ENCODE measurements at regions of chr15 and their contacts with region 1.

Region 1: DNA sequence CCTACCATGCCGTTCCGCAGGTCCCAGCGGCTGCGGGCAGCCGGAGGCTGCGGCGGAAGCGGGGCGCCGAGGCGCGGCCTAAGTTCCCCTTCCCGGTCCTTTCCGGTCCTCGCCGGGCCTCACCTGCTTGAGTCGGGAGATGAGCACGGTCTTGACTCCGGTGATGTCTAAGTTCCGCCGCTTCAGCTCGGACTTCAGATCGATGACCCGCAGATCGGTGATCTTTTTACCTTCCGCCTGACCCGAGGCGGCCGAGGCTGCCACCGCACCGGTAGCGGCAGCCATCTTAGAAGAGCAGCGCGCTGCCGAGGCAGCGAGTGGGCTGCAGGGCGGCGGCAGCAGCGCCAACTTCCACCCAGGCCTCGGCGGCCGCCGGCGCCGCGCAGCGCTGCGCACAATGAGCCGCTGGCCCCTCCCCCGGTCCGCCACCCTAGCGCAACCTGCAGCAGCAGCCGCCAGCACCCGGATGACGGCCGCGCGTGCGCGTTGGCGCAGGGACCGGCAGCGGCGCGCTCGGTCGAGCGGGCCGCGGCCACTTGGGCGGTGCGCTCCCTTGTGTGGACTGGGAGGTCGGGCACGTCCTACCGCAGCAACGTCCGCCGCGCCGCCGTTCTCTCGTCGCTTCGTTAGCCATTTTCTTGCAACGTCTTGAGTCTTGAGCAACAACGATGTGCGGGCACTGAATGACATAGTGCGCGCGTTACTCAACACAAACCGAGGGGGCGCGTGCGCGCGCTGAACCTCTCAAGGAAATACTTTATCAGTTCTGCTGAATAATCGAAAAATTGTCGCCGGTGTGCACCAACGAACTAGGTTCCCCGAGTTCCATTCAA is at the start of gene SLTM:
- DNase-seq: peak; percentile 93 to 95 (median 94)
- H3K4me3 ChIP-seq: peak within 1 kb of the TSS; percentile 59 to 97
- H3K4me3 Mint-ChIP-seq: peak within 1 kb of the TSS; percentile 96 to 100 (median 99)
- H3K27ac ChIP-seq: peak within 1 kb of the TSS; percentile 98
- H3K27ac Mint-ChIP-seq: peak within 1 kb of the TSS; percentile 94 to 100 (median 100)
- H3K4me1 ChIP-seq: peaks cover 25% of the 10 kb centered on the region
- H3K4me1 Mint-ChIP-seq: peaks cover 9 to 35% (median 19%) of the 10 kb centered on the region in 4 donors
- H3K27me3 ChIP-seq: no peaks in the 10 kb centered on the region
- H3K27me3 Mint-ChIP-seq: no peaks in the 10 kb centered on the region
- total RNA-seq, gene SLTM: 149 to 153 TPM

Region 2: GRCh38 chr15:58282060-58282708 is 651.3 kb before region 1 on chr15:
- CTCF ChIA-PET with region 1: no interaction called
- POLR2A ChIA-PET with region 1: no interaction called
- intact Hi-C with region 1: no loop called
- DNase-seq: no peak
- H3K4me3 ChIP-seq: no peak overlapping the region
- H3K4me3 Mint-ChIP-seq: no peak overlapping the region
- H3K27ac ChIP-seq: no peak overlapping the region
- H3K27ac Mint-ChIP-seq: no peak overlapping the region
- H3K4me1 ChIP-seq: no peaks in the 10 kb centered on the region
- H3K4me1 Mint-ChIP-seq: peaks cover 0 to 3% (median 0%) of the 10 kb centered on the region in 4 donors
- H3K27me3 ChIP-seq: no peaks in the 10 kb centered on the region
- H3K27me3 Mint-ChIP-seq: peaks cover 6 to 13% of the 10 kb centered on the region in 2 donors

Region 3: GRCh38 chr15:58749532-58750337 is 183.8 kb before region 1 on chr15 and contains the start of gene ADAM10:
- CTCF ChIA-PET with region 1: no interaction called
- POLR2A ChIA-PET with region 1: no interaction called
- intact Hi-C with region 1: loop called (anchors 1 kb)
- DNase-seq: peak; percentile 93 to 98 (median 94)
- H3K4me3 ChIP-seq: peak within 1 kb of the TSS; percentile 68 to 96
- H3K4me3 Mint-ChIP-seq: peak within 1 kb of the TSS; percentile 96 to 99 (median 97)
- H3K27ac ChIP-seq: peak within 1 kb of the TSS; percentile 79
- H3K27ac Mint-ChIP-seq: peak within 1 kb of the TSS; percentile 94 to 96 (median 95)
- H3K4me1 ChIP-seq: peaks cover 46% of the 10 kb centered on the region
- H3K4me1 Mint-ChIP-seq: peaks cover 26 to 49% (median 36%) of the 10 kb centered on the region in 4 donors
- H3K27me3 ChIP-seq: no peaks in the 10 kb centered on the region
- H3K27me3 Mint-ChIP-seq: no peaks in the 10 kb centered on the region
- total RNA-seq, gene ADAM10: 135 TPM

Region 4: GRCh38 chr15:58957101-58957973 is 23.8 kb after region 1 on chr15:
- CTCF ChIA-PET with region 1: no interaction called
- POLR2A ChIA-PET with region 1: no interaction called
- intact Hi-C with region 1: loop called (anchors 1 kb)
- DNase-seq: peak; percentile 63 to 69 (median 66)
- H3K4me3 ChIP-seq: no peak overlapping the region
- H3K4me3 Mint-ChIP-seq: peak overlapping the region in 1 of 8 donors; percentile 41
- H3K27ac ChIP-seq: no peak overlapping the region
- H3K27ac Mint-ChIP-seq: peak overlapping the region in 2 of 7 donors; percentile 70 to 84
- H3K4me1 ChIP-seq: peaks cover 4% of the 10 kb centered on the region
- H3K4me1 Mint-ChIP-seq: peaks cover 5 to 6% (median 6%) of the 10 kb centered on the region in 4 donors
- H3K27me3 ChIP-seq: no peaks in the 10 kb centered on the region
- H3K27me3 Mint-ChIP-seq: peaks cover 0 to 1% of the 10 kb centered on the region in 2 donors

Region 5: DNA sequence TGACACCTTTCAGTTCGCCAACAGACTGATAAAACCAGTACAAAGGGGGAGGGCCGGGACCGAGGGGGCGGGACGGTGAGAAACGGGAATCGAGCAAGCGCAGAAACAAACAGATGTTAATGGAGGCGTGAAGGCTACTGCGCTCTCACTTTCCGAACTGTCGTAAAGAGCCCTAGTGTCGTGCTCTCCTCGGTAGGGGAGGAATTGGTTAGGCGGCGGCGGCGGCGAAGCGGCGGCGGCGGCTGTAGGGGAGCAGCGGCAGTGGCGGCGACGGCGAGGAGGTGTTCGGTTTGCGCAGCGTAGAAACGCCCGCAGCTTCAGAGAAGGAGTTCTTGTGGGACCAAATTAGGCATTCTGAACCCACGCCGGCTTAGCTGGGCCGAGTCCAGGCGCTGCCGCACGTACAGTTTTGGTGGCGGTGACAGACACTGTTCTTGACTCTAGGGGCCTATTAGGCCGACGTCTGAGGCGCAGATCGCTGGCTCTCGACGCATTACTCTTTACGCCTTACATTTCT is 54.0 kb after region 1 on chr15 and contains the start of gene RNF111:
- CTCF ChIA-PET with region 1: no interaction called
- POLR2A ChIA-PET with region 1: interaction called, 9 read pairs
- intact Hi-C with region 1: loop called (anchors 1 kb)
- DNase-seq: peak; percentile 90 to 97 (median 91)
- H3K4me3 ChIP-seq: peak within 1 kb of the TSS; percentile 91 to 92
- H3K4me3 Mint-ChIP-seq: peak within 1 kb of the TSS; percentile 93 to 98 (median 96)
- H3K27ac ChIP-seq: peak within 1 kb of the TSS; percentile 89
- H3K27ac Mint-ChIP-seq: peak within 1 kb of the TSS; percentile 84 to 97 (median 94)
- H3K4me1 ChIP-seq: peaks cover 40% of the 10 kb centered on the region
- H3K4me1 Mint-ChIP-seq: peaks cover 31 to 52% (median 42%) of the 10 kb centered on the region in 4 donors
- H3K27me3 ChIP-seq: no peaks in the 10 kb centered on the region
- H3K27me3 Mint-ChIP-seq: no peaks in the 10 kb centered on the region
- total RNA-seq, gene RNF111: 54.9 to 60.9 TPM

Region 6: GRCh38 chr15:59094077-59094476 is 160.6 kb after region 1 on chr15:
- CTCF ChIA-PET with region 1: no interaction called
- POLR2A ChIA-PET with region 1: no interaction called
- intact Hi-C with region 1: no loop called
- DNase-seq: no peak
- H3K4me3 ChIP-seq: no peak overlapping the region
- H3K4me3 Mint-ChIP-seq: no peak overlapping the region
- H3K27ac ChIP-seq: no peak overlapping the region
- H3K27ac Mint-ChIP-seq: no peak overlapping the region
- H3K4me1 ChIP-seq: no peaks in the 10 kb centered on the region
- H3K4me1 Mint-ChIP-seq: peaks cover 0 to 2% (median under 1%) of the 10 kb centered on the region in 4 donors
- H3K27me3 ChIP-seq: no peaks in the 10 kb centered on the region
- H3K27me3 Mint-ChIP-seq: no peaks in the 10 kb centered on the region

Region 7: GRCh38 chr15:59104912-59105732 is 171.6 kb after region 1 on chr15 and contains the start of gene CCNB2:
- CTCF ChIA-PET with region 1: no interaction called
- POLR2A ChIA-PET with region 1: no interaction called
- intact Hi-C with region 1: loop called (anchors 5 kb)
- DNase-seq: peak; percentile 85 to 91 (median 87)
- H3K4me3 ChIP-seq: peak within 1 kb of the TSS; percentile 66 to 80
- H3K4me3 Mint-ChIP-seq: peak within 1 kb of the TSS; percentile 91 to 96 (median 93)
- H3K27ac ChIP-seq: peak within 1 kb of the TSS; percentile 68
- H3K27ac Mint-ChIP-seq: peak within 1 kb of the TSS; percentile 92 to 99 (median 97)
- H3K4me1 ChIP-seq: peaks cover 6% of the 10 kb centered on the region
- H3K4me1 Mint-ChIP-seq: peaks cover 5 to 19% (median 13%) of the 10 kb centered on the region in 4 donors
- H3K27me3 ChIP-seq: no peaks in the 10 kb centered on the region
- H3K27me3 Mint-ChIP-seq: no peaks in the 10 kb centered on the region
- total RNA-seq, gene CCNB2: 0.44 TPM in 1 of 2 experiments, not detected in the other

Region 8: GRCh38 chr15:59656897-59657634 is 723.6 kb after region 1 on chr15 and contains the start of gene GTF2A2:
- CTCF ChIA-PET with region 1: no interaction called
- POLR2A ChIA-PET with region 1: no interaction called
- intact Hi-C with region 1: loop called (anchors 1 kb)
- DNase-seq: peak; percentile 90 to 95 (median 91)
- H3K4me3 ChIP-seq: peak within 1 kb of the TSS; percentile 71 to 76
- H3K4me3 Mint-ChIP-seq: peak within 1 kb of the TSS in 7 of 8 donors; percentile 6 to 62 (median 53)
- H3K27ac ChIP-seq: peak within 1 kb of the TSS; percentile 79
- H3K27ac Mint-ChIP-seq: peak within 1 kb of the TSS in 4 of 7 donors; percentile 28 to 89 (median 51)
- H3K4me1 ChIP-seq: peaks cover 29% of the 10 kb centered on the region
- H3K4me1 Mint-ChIP-seq: peaks cover 10 to 16% (median 13%) of the 10 kb centered on the region in 4 donors
- H3K27me3 ChIP-seq: no peaks in the 10 kb centered on the region
- H3K27me3 Mint-ChIP-seq: no peaks in the 10 kb centered on the region
- total RNA-seq, gene GTF2A2: 58.5 to 64.6 TPM

Measured in CD4-positive, alpha-beta memory T cell (primary cell).